ENCODE measurements at regions of chr12 and their contacts with region 1.

Region 1: GRCh38 chr12:107607464-107608392 is 77.9 kb upstream of the PWP1 start:
- DNase-seq: no peak
- H3K4me3 ChIP-seq: no peak overlapping the region
- CTCF ChIP-seq: peak; percentile 89

Region 2: GRCh38 chr12:106845902-106846301 is 761.8 kb before region 1 on chr12:
- CTCF ChIA-PET with region 1: no interaction called
- POLR2A ChIA-PET with region 1: no interaction called
- DNase-seq: no peak
- H3K4me3 ChIP-seq: no peak overlapping the region
- CTCF ChIP-seq: no peak

Region 3: DNA sequence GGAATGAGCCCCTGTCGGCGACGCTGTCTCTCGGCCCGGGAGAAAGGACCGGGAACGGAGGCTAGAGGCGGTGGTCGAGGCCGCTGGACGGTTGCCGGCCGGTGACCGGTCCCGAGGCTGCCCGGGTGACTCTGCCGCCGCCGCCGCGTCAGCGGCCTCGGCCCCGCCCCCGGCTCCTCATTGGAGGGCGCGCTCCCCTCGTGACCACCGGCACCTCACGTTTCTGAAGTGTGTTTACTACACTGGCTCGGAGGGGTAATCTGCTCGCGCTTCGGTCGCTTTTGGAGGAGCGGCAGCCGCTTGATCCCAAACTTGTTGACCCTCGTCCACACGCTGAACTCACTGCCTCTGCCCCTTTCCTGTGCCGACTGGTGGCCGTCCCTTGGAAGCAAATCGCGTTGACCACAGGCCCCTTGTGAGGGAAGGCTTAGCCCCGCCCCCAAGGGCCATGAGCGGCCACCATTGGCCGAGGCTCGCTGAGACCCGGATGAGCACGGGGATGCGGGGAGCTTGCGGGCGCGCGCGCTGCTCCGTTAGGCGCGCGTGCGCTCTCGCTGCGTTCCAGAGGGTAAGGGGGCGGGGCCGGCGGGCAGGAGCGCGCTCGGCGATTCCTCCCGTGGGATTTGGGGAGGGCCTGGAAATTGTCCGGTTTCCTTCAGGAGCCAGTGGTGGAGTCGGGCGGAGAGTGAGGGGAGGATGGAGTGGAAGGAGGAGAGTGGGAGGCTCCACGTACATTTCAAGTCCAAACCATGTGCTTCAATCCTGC is 514.1 kb before region 1 on chr12 and contains the start of gene CRY1:
- CTCF ChIA-PET with region 1: interaction called, 42 read pairs
- POLR2A ChIA-PET with region 1: no interaction called
- DNase-seq: peak; percentile 59
- H3K4me3 ChIP-seq: peak within 1 kb of the TSS; percentile 97
- CTCF ChIP-seq: no peak

Region 4: DNA sequence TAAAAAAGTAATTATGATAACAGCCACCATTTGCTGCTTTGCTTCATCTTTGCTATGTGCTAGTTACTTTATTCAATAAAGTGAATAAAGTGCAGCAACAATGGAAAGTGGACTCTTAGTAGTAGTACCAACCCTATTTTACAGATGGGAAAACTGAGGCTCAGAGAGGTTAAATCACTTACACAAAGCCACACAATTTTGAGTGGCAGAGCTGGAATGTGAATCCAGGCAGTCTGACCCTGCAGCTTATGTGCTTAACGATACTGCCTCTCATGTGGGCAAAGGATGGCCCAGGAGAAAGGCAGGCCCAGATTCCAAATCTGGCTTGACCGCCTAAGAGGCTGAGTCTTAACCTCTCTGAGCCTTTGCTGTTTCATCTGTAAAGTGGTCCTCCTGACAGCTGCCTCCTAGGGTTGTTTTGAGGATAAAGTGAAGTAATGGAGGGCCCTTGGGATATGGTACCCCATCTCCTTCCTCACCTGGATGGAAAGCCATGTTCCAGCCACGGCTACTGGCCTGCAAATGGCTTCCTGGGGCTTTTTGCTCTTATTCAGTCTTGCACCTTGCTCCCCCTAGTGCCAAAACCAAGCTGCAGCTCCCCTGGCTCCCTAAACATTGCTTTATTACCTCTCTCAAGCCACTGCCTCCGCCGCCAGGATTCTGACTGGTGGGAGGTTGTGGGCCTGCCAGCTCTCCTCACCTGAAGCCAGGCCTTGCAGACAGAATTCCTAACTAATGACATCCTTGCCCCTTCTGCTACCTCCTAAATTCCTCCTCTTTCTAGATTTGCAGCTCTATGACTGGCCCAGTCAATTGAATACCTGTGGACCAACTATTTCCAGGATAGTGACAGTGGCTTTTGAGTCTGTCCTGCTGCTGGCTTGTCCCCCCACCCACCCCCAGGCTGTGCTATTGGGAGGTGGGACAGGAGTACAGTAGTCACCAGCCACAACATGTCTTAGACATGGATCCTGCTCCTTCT is 205.4 kb before region 1 on chr12:
- CTCF ChIA-PET with region 1: interaction called, 251 read pairs
- POLR2A ChIA-PET with region 1: no interaction called
- DNase-seq: no peak
- H3K4me3 ChIP-seq: no peak overlapping the region
- CTCF ChIP-seq: peak; percentile 74

Region 5: GRCh38 chr12:107458163-107458562 is 149.6 kb before region 1 on chr12:
- CTCF ChIA-PET with region 1: interaction called, 13 read pairs
- POLR2A ChIA-PET with region 1: no interaction called
- DNase-seq: no peak
- H3K4me3 ChIP-seq: no peak overlapping the region
- CTCF ChIP-seq: no peak

Region 6: DNA sequence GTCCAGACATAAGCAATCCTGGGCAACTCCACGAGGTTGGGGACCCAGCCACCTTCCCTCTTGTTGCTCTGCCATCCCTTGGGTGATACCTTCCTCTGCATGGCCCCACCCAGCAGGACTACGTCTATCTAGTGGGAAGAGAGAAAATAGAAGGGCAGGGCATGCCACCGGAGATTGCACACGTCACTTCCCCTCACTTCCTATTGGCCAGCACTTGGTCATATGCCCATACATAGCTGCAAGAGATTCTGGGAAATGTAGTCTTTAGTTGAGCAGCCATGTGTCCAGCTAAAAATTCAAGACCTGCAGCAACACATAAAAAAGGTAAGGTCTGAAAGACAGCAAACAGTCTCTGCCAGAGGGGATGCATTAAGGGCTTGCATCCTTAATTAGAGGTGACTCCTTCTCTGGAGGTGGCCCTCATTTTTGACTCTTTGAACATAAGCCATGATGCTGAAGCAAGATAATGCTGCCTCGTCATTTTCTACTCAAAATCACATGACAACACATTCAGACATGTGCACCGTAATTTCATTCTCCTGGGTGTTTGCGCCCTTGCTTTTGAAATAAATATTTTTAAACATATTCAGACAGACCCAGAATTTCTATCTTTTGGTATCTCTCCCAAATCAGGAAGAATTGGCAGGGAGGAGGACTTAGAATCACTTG is 13.9 kb before region 1 on chr12:
- CTCF ChIA-PET with region 1: interaction called, 96 read pairs
- POLR2A ChIA-PET with region 1: no interaction called
- DNase-seq: no peak
- H3K4me3 ChIP-seq: no peak overlapping the region
- CTCF ChIP-seq: no peak

Measured in AG04449 (cell line).